ENCODE measurements at regions of chr6 and their contacts with region 1.

Region 1: DNA sequence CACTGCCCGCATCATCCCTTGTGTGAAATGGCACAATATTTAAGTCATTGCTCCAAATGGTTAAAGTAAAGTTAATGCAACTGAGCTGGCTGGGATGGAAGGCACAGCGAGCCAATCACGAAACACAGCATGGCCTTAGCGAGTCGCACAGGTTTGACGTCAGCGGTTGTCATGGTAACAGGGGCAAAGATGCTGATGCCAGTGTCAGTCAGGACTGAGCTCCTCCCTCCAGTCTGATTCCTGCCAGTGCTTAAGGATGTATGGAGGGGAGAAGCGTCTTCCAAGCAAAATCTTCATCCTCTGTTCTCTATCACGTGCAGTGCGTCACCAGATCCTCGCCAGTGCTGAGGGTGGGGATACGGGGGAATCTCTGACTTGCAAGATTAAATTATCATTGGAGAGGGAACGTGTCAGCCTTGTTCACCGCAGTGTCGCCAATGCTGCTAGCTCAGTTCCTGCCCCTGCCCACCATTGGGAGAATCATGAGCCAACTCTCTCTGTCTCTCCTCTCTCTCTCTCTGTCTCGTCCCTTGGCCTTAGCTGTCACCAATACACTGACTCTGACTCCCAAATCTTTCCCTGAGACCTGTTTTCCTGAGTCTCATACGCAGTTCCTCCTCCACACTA is 24.5 kb downstream of the TSPYL4 start:
- DNase-seq: peak; percentile 42

Region 2: DNA sequence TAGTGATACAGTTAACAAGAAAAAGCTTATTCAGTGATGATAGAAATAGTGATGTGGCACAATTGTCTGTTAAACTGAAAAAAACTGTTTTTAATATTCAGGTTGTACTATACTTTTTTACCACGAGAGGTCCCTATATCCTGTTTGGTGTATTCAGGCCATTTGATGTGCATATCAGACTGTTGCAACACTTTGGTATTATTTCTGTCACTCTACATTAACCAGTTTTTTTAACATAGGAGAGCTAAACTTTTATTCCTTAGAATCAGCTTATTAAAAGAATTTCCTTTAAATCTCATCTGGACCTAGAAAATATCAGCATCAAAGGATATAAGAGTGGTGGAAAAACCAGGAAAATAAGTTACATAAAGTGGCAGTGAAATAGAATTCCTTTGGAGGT is 12.3 kb before region 1 on chr6:
- CTCF ChIA-PET with region 1: interaction called, 16 read pairs
- POLR2A ChIA-PET with region 1: no interaction called
- DNase-seq: peak; percentile 46

Measured in HEK293T (cell line).